WTC11 (cell line): ENCODE measurements at regions of chr9 and their contacts with region 1.

Region 1: DNA sequence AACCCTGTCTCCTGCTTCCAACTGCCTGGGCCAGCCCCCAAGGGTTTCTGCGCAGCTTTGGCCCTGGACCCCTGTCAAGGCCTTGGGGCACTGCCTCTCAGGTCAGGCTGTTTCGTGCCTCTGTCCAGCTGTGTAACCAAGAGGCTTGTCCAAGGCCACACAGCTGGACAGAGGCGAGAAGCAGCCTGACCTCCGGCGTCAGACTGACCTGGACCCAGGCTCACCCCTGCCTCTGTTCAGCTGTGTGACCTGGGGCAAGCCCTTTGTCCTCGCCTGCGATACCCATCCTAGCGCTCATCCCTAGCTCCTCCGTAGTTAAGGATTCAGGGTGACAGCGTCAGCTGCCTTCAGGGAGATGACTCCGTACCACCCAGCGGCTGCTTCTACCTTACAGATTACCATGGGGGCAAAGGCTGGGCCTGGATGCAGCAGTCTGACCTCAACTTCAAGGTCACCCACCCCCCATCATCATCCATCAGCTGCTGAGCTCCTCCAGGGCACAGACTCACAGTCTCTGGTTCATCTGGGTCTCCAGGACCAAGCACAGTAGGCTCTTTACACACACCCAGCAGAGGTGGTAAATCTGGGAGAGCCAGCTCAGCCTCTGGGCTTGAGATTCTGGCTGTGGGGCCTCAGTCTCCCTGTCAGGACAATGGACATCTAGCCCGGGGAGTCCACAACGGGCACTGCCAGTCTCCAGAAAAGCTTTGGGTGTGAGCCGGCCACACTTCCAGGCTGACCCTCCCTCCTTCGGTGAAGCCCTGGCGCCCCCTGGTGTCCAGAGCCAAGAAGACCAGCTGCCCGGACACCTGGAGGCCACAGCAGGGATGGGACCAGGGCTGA is 7.9 kb downstream of the AK1 start:
- DNase-seq: peak; percentile 96
- ATAC-seq: peak; percentile 89
- H3K4me3 Mint-ChIP-seq: no peak overlapping the region
- H3K27ac Mint-ChIP-seq: no peak overlapping the region; the same call in 1 of the 2 replicates
- H3K4me1 Mint-ChIP-seq: peaks cover 10% of the 10 kb centered on the region
- H3K27me3 Mint-ChIP-seq: no peaks in the 10 kb centered on the region
- CTCF ChIP-seq: peak; percentile 92

Region 2: DNA sequence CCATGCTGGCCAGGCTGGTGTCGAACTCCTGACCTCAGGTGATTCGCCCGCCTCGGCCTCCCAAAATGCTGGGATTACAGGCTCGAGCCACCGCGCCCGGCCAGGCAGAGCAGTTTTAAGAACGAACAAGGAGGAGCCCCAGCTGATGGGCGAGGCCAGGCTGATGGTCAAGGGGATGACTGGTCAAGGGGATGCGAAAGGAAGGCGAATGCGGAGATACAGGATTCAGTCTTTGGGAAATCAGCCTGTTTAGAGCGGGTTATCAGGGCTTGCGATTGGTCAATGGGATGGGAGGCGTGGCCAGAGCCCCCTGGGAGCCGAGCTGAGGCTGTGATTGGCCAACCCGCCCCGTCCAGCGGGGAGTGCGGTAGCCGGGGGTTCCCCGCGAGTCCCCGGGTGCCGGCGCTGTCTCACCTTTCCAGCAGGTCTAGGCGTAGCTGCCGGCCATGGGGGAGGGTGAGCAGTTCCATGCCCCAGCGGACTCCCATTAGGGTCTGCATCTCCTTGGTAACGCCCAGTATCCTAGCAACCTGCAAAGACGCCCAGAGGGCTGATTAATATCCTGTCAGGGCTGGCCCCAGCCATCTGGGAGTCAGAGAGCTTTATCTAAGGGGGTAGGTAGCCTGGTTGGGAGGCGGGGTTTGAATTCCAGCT is 127.0 kb before region 1 on chr9:
- CTCF ChIA-PET with region 1: interaction called, 10 read pairs
- POLR2A ChIA-PET with region 1: no interaction called
- DNase-seq: peak; percentile 94
- ATAC-seq: peak; percentile 85
- H3K4me3 Mint-ChIP-seq: peak overlapping the region; percentile 90
- H3K27ac Mint-ChIP-seq: peak overlapping the region; percentile 97
- H3K4me1 Mint-ChIP-seq: peaks cover 6% of the 10 kb centered on the region
- H3K27me3 Mint-ChIP-seq: peaks cover 15% of the 10 kb centered on the region
- CTCF ChIP-seq: no peak

Region 3: DNA sequence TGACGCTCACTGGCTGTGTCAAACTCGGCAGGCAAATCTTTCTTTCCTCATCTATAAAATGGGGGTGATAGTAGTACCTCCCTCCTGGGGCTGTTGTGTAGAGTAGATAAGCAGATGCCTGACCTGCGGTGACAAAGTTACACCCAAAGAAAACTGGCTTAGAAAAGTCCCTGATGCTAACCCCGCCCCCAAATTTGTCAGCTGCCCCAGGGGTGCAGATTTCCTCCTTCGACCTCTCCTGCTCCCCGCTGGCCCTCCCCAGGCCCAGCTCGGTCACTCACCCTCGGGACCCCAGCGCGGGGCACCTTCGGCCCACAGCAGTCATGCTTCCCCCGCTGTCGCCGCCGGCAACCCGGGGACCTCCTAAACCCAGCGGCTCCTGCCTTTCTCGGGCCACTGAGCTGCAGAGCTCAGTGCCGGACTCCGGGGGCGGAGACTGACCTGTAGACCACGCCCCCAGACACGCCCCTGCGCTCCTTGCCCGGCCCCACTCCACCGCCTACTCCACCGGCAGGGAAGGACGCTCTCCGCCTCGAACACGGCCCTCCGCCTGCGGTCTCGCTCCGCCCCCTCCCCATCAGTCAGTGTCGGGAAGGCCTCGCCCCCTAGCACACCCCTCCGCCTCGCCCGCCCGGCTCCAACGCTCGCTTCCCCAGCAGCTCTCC is 98.5 kb before region 1 on chr9:
- CTCF ChIA-PET with region 1: interaction called, 30 read pairs
- POLR2A ChIA-PET with region 1: interaction called, 3 read pairs
- DNase-seq: peak; percentile 100
- ATAC-seq: peak; percentile 97
- H3K4me3 Mint-ChIP-seq: peak overlapping the region; percentile 84
- H3K27ac Mint-ChIP-seq: no peak overlapping the region
- H3K4me1 Mint-ChIP-seq: peaks cover 32% of the 10 kb centered on the region
- H3K27me3 Mint-ChIP-seq: peaks cover 11% of the 10 kb centered on the region
- CTCF ChIP-seq: no peak

Region 4: GRCh38 chr9:127802576-127803443 is 66.7 kb before region 1 on chr9 and contains the start of gene FPGS:
- CTCF ChIA-PET with region 1: interaction called, 17 read pairs
- POLR2A ChIA-PET with region 1: interaction called, 9 read pairs
- DNase-seq: peak; percentile 85
- ATAC-seq: peak; percentile 85
- H3K4me3 Mint-ChIP-seq: peak within 1 kb of the TSS; percentile 99
- H3K27ac Mint-ChIP-seq: peak within 1 kb of the TSS; percentile 98
- H3K4me1 Mint-ChIP-seq: peaks cover 8% of the 10 kb centered on the region
- H3K27me3 Mint-ChIP-seq: no peaks in the 10 kb centered on the region
- CTCF ChIP-seq: no peak
- total RNA-seq, gene FPGS: 67.7 to 81.7 TPM (median 69.3 TPM) in 3 replicates

Region 5: DNA sequence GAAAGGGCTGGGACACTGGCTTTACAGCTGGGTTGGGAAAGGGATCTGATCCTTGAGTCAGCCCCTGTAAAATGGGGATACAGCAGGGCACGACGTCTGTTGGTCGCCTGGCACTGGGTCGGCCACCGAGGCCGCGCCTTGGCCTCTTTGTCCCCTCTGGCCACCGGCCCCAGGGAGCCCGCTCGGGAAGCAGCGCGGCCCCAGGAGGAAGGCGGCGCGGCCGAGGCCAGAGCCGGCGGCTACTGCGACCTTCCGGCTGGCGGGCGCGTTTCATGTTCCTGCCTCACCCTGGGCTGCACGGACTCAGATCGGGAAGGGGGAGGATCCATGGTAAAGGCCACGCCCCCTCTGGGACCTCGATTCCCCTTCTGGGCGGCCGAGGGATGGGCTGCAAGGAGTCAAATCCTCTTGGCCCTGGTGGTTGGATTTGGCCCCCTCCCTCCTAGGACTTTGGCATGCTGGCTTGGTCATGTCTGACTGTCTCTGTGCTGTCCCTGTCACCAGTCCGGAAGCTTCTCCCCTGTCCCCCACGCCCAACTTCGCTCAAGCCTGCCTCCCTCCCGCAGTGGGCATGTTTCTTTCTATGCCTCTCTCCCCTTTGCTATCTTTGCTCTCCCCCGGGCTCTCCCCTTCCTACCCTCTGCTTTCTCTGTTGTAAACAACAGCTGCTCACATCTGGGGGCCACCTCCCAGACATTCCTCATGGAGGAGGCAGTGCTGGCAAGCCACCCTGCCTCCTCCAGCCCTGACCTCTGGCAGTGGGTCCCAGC is 41.1 kb before region 1 on chr9:
- CTCF ChIA-PET with region 1: interaction called, 115 read pairs
- POLR2A ChIA-PET with region 1: interaction called, 3 read pairs
- DNase-seq: peak; percentile 98
- ATAC-seq: peak; percentile 78
- H3K4me3 Mint-ChIP-seq: peak overlapping the region; percentile 62
- H3K27ac Mint-ChIP-seq: peak overlapping the region; percentile 89
- H3K4me1 Mint-ChIP-seq: peaks cover 36% of the 10 kb centered on the region
- H3K27me3 Mint-ChIP-seq: peaks cover 23% of the 10 kb centered on the region
- CTCF ChIP-seq: no peak

Region 6: DNA sequence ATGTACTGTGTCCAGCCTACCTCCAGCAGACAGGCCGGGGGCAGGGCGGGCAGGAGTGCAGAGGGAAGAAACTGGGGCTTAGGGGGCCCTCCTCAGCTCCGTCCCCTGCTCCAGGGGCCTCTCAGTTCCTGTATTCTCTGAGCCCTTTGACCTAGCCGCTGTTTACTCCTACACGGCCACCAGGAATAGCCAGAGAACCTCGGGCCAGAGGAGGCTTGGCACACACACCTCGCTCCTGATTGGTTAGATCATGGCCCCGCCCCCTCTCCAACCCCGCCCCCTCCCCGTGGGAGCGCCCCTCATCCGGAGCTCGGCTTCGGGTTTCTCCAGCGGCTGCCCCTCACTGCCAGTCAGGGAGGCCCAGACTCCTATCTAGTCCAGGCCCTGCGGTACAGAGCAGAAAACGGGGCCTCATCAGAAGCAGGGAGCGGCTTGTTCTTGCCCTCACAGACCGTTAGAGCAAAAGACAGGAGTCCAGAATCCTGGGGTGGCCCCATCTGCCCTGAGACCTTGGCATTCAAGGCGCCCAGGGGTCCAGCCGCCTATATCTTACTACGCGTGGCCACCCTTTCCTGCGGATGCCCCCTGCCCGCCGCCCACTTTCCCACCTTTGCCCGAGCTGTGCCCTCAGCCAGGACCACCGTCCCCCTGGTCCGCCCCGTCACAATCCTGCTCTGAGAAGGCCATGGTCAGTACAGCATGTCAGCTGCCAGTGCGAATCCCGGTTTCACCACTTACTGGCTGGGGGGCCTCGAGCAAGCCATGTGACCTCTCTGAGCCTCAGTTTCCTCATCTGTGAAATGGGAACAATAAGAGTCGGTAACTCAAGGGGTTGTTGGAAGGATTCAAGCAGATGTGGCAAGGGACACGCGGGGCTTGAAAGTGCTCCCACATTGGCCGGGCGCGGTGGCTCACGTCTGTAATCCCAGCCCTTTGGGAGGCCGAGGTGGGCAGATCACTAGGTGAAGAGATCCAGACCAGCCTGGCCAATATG is 28.0 kb after region 1 on chr9:
- CTCF ChIA-PET with region 1: interaction called, 33 read pairs
- POLR2A ChIA-PET with region 1: no interaction called
- DNase-seq: peak; percentile 88
- ATAC-seq: peak; percentile 89
- H3K4me3 Mint-ChIP-seq: peak overlapping the region; percentile 87
- H3K27ac Mint-ChIP-seq: peak overlapping the region; percentile 57
- H3K4me1 Mint-ChIP-seq: peaks cover 23% of the 10 kb centered on the region
- H3K27me3 Mint-ChIP-seq: no peaks in the 10 kb centered on the region; the same call in 1 of the 2 replicates
- CTCF ChIP-seq: no peak

Region 7: DNA sequence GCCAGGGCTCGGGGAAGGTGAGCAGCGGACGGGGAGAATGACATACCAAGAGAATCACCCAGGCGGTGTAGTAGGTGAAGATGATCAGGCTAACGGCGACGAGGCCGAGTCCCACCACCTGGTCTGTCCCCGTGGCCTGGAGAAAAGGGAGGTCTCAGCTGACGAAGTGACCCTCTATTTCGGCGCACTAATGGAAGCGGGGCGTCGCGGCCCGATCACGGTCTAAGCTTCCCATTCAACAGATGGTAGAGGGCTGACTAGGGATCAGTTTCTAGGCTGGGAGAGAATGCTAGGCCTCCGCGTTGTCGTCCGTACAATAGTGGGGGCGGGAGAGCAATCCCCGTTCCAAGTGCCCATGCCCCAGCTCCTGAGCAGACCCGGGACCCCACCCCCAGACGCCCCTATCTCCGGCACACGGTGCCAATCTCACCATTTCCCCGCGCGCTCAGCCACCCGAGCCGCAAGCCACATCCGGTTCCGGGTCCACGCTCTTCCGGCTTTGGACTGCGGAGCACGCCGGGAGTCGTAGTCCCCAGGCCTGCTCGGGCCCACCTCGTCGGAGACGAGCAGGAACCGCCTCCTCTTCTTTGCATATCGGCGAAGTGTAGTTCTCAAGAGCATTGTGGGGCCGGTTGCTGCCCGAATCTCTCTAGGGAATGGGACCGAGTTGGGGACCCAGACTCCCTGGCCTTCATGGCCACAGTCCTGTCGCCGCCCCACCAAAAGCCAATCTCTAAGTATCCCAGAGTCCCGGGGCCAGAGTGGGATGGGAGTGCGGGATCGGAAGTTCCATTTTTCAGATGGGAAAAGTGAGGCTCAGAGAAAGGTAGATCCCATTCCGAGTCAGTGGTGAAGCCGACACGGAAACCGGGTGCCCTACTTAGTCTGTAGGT is 68.1 kb after region 1 on chr9 and contains the start of gene DPM2:
- CTCF ChIA-PET with region 1: no interaction called
- POLR2A ChIA-PET with region 1: no interaction called
- DNase-seq: peak; percentile 84
- ATAC-seq: peak; percentile 90
- H3K4me3 Mint-ChIP-seq: peak within 1 kb of the TSS; percentile 90
- H3K27ac Mint-ChIP-seq: peak within 1 kb of the TSS; percentile 95
- H3K4me1 Mint-ChIP-seq: peaks cover 30% of the 10 kb centered on the region
- H3K27me3 Mint-ChIP-seq: no peaks in the 10 kb centered on the region
- CTCF ChIP-seq: no peak
- total RNA-seq, gene DPM2: 53.3 to 58.2 TPM (median 56.1 TPM) in 3 replicates